ENCODE measurements at regions of chr16 and their contacts with region 1.

Region 1: DNA sequence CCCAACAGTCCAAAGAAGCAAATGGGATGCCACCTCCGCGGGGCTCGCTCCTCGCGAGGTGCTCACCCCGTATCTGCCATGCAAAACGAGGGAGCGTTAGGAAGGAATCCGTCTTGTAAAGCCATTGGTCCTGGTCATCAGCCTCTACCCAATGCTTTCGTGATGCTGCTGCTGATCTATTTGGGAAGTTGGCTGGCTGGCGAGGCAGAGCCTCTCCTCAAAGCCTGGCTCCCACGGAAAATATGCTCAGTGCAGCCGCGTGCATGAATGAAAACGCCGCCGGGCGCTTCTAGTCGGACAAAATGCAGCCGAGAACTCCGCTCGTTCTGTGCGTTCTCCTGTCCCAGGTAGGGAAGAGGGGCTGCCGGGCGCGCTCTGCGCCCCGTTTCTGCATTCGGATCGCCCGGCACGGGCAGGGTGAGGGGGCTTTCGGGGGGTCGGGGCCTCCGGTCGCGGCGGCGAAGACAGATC is at the start of gene CDH13:
- DNase-seq: peak; percentile 62
- ATAC-seq: peak; percentile 53 to 68
- total RNA-seq, gene CDH13: 68.6 to 100 TPM

Region 2: GRCh38 chr16:82368041-82368440 is 258.8 kb before region 1 on chr16:
- intact Hi-C with region 1: loop called in 1 of 2 experiments (anchors 10 kb)
- DNase-seq: peak; percentile 64
- ATAC-seq: peak; percentile 94 to 95

Region 3: GRCh38 chr16:82738699-82739098 is 111.9 kb after region 1 on chr16:
- intact Hi-C with region 1: loop called in 1 of 2 experiments (anchors 5 kb)
- DNase-seq: no peak
- ATAC-seq: no peak

Region 4: DNA sequence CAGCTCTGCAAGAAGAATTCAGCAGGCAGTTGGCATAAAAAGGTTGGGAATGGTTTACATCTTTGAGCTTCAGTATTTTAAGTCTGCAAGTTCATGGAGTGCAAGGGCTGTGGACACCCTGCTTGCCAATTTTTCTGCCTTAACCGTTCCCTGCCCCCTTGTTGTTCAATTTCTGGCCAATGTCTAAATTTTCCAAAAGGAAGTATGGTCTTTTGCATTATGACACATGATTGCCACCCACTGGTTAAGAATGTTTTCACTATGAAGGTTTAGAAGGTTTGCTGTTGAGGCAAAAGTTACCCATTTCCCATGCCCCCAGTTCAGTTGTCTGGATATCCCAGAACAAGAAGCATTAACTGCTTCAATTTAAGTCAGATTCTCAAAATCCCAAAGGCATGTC is 441.9 kb after region 1 on chr16:
- intact Hi-C with region 1: loop called in 1 of 2 experiments (anchors 1 kb)
- DNase-seq: no peak
- ATAC-seq: peak in 1 of 2 donors; percentile 68

Region 5: DNA sequence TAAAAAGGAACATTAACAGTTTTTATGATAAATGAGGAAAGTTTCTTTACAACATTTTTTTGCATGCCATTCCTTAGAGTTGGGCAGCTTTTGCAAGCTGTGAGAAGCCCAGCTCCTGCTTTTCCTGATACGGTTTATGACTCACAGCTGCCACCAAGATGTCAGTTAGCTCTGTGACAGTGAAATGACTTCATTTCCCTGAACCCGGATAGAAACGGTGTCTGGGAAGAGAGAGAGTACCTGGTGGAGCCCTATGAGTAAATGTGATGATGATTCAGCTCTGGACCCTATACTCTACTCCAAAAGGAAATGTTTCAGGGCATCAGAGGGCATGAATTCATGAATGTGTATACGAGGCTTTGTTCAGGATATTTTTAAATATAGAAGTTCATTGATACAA is 814.7 kb after region 1 on chr16:
- intact Hi-C with region 1: loop called in 1 of 2 experiments (anchors 10 kb)
- DNase-seq: no peak
- ATAC-seq: peak in 1 of 2 donors; percentile 56

Measured in left cardiac atrium (tissue), 4 donors.